A673 (cell line): ENCODE measurements at regions of chr10 and their contacts with region 1.

Region 1: DNA sequence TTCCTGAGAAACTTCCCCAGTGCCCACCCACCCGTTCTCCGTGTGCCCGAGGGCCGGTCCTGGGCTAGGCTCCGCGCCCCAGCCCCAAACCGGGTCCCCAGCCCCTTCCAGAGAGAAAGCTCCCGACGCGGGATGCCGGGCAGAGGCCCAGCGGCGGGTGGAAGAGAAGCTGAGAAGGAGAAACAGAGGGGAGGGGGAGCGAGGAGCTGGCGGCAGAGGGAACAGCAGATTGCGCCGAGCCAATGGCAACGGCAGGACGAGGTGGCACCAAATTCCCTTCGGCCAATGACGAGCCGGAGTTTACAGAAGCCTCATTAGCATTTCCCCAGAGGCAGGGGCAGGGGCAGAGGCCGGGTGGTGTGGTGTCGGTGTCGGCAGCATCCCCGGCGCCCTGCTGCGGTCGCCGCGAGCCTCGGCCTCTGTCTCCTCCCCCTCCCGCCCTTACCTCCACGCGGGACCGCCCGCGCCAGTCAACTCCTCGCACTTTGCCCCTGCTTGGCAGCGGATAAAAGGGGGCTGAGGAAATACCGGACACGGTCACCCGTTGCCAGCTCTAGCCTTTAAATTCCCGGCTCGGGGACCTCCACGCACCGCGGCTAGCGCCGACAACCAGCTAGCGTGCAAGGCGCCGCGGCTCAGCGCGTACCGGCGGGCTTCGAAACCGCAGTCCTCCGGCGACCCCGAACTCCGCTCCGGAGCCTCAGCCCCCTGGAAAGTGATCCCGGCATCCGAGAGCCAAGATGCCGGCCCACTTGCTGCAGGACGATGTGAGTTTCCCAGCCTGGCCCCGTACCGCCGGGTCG is at the start of gene SCD:
- DNase-seq: peak; percentile 98
- H3K4me3 ChIP-seq: peak within 1 kb of the TSS; percentile 93
- H3K27ac ChIP-seq: peak within 1 kb of the TSS; percentile 94
- H3K4me1 ChIP-seq: peaks cover 21% of the 10 kb centered on the region
- H3K27me3 ChIP-seq: no peaks in the 10 kb centered on the region
- CTCF ChIP-seq: no peak
- total RNA-seq, gene SCD: 519 and 559 TPM in 2 replicates

Region 2: DNA sequence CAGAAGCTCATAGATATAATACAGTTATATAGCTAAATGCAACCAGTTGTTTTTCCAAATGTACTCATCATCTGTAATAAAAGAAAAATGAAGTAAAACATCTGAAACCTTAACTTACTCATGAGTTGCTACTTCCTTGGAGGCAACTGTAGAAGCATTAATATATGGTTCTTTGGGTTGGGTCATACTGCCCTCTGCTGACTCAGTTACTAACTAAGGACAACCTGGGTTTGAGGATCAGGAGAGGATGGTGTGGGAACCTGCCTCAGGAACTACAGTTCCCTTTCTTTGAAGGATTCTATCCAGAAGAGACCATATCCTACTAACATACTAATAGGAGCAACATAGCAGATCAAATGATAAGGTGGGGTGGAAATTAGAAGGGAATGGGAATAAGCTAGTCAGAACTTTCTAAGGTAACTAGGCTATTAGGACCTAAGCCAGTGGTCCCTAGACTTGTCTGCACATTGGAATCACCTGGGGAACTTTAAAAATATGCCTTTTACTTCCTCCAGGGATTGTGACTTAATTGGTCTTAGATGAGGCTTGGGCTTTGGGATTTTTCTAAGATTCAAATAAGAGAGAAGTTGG is 635.7 kb before region 1 on chr10:
- CTCF ChIA-PET with region 1: no interaction called
- POLR2A ChIA-PET with region 1: no interaction called
- intact Hi-C with region 1: no loop called
- DNase-seq: peak; percentile 60
- H3K4me3 ChIP-seq: no peak overlapping the region
- H3K27ac ChIP-seq: no peak overlapping the region
- H3K4me1 ChIP-seq: no peaks in the 10 kb centered on the region
- H3K27me3 ChIP-seq: no peaks in the 10 kb centered on the region
- CTCF ChIP-seq: peak; percentile 66

Region 3: GRCh38 chr10:99730026-99730425 is 616.9 kb before region 1 on chr10:
- CTCF ChIA-PET with region 1: no interaction called
- POLR2A ChIA-PET with region 1: no interaction called
- intact Hi-C with region 1: no loop called
- DNase-seq: no peak
- H3K4me3 ChIP-seq: no peak overlapping the region
- H3K27ac ChIP-seq: no peak overlapping the region
- H3K4me1 ChIP-seq: no peaks in the 10 kb centered on the region
- H3K27me3 ChIP-seq: no peaks in the 10 kb centered on the region
- CTCF ChIP-seq: no peak

Region 4: GRCh38 chr10:99754670-99755069 is 592.3 kb before region 1 on chr10:
- CTCF ChIA-PET with region 1: no interaction called
- POLR2A ChIA-PET with region 1: no interaction called
- intact Hi-C with region 1: no loop called
- DNase-seq: no peak
- H3K4me3 ChIP-seq: no peak overlapping the region
- H3K27ac ChIP-seq: no peak overlapping the region
- H3K4me1 ChIP-seq: peaks cover 27% of the 10 kb centered on the region
- H3K27me3 ChIP-seq: no peaks in the 10 kb centered on the region
- CTCF ChIP-seq: no peak

Region 5: DNA sequence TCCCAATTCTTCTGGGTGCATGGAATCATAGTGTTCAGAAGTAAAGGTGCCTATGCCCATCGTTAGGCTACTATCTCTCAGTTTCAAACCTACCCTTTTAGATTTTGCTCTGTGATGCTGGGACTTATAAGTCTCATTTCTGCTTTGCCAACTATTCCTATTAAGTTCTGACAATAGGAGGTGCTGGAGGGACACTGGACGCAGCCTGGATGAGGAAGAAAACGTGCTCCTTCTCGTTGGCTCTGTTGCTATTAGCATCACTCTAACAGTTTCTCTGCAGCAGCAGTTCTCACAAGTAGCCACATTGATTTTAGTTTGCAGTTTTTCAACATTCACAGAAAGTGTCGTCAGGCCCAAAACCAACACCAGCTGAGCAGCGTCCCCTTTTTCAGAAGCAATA is 492.1 kb before region 1 on chr10:
- CTCF ChIA-PET with region 1: no interaction called
- POLR2A ChIA-PET with region 1: no interaction called
- intact Hi-C with region 1: loop called (anchors 10 kb)
- DNase-seq: peak; percentile 83
- H3K4me3 ChIP-seq: no peak overlapping the region
- H3K27ac ChIP-seq: no peak overlapping the region
- H3K4me1 ChIP-seq: peaks cover 13% of the 10 kb centered on the region
- H3K27me3 ChIP-seq: no peaks in the 10 kb centered on the region
- CTCF ChIP-seq: peak; percentile 71

Region 6: GRCh38 chr10:100174699-100175677 is 172.0 kb before region 1 on chr10:
- CTCF ChIA-PET with region 1: no interaction called
- POLR2A ChIA-PET with region 1: no interaction called
- intact Hi-C with region 1: no loop called
- DNase-seq: no peak
- H3K4me3 ChIP-seq: no peak overlapping the region
- H3K27ac ChIP-seq: no peak overlapping the region
- H3K4me1 ChIP-seq: no peaks in the 10 kb centered on the region
- H3K27me3 ChIP-seq: no peaks in the 10 kb centered on the region
- CTCF ChIP-seq: no peak

Region 7: DNA sequence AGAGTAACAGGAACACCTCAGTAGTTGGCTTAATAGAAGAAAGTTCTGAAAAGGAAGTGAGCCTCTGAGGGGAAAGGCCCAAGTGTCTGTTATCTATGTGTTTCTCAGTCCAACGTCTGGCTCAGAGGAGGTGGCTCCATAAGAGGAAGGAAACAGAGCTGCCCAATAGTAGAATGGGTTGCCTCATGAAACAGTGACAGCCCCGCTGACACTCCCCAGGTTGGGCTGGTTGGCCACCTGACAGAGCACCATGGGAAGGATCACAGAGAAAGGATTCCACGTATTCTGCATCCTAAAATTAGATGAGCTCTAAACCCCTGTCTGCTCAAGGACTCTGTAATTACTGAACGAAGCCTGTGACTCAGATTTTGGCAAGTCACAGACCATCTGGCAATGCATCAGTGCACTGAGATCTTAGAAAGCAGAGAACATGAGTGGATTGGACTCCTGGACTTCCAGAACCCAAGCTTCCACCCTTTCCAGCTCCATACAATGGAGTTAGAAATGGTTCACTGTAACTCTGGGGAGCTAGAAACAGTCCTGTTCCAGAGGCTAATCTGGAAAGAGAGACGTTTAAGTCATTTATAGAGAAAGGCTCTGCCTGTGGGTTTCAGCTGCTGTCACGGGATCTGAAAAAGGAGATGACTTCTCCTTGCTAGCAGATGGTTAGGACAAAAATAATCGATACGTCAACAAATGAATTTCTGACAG is 19.8 kb before region 1 on chr10:
- CTCF ChIA-PET with region 1: no interaction called
- POLR2A ChIA-PET with region 1: interaction called, 23 read pairs
- intact Hi-C with region 1: no loop called
- DNase-seq: peak; percentile 38
- H3K4me3 ChIP-seq: no peak overlapping the region
- H3K27ac ChIP-seq: no peak overlapping the region
- H3K4me1 ChIP-seq: peaks cover 18% of the 10 kb centered on the region
- H3K27me3 ChIP-seq: no peaks in the 10 kb centered on the region
- CTCF ChIP-seq: no peak

Region 8: GRCh38 chr10:100373298-100374136 is 26.6 kb after region 1 on chr10:
- CTCF ChIA-PET with region 1: interaction called, 4 read pairs
- POLR2A ChIA-PET with region 1: interaction called, 12 read pairs
- intact Hi-C with region 1: no loop called
- DNase-seq: peak; percentile 99
- H3K4me3 ChIP-seq: peak overlapping the region; percentile 75
- H3K27ac ChIP-seq: peak overlapping the region; percentile 100
- H3K4me1 ChIP-seq: peaks cover 30% of the 10 kb centered on the region
- H3K27me3 ChIP-seq: no peaks in the 10 kb centered on the region
- CTCF ChIP-seq: no peak

Region 9: GRCh38 chr10:100419911-100420449 is 73.0 kb after region 1 on chr10:
- CTCF ChIA-PET with region 1: no interaction called
- POLR2A ChIA-PET with region 1: interaction called, 14 read pairs
- intact Hi-C with region 1: no loop called
- DNase-seq: no peak
- H3K4me3 ChIP-seq: no peak overlapping the region
- H3K27ac ChIP-seq: no peak overlapping the region
- H3K4me1 ChIP-seq: no peaks in the 10 kb centered on the region
- H3K27me3 ChIP-seq: no peaks in the 10 kb centered on the region
- CTCF ChIP-seq: no peak

Region 10: DNA sequence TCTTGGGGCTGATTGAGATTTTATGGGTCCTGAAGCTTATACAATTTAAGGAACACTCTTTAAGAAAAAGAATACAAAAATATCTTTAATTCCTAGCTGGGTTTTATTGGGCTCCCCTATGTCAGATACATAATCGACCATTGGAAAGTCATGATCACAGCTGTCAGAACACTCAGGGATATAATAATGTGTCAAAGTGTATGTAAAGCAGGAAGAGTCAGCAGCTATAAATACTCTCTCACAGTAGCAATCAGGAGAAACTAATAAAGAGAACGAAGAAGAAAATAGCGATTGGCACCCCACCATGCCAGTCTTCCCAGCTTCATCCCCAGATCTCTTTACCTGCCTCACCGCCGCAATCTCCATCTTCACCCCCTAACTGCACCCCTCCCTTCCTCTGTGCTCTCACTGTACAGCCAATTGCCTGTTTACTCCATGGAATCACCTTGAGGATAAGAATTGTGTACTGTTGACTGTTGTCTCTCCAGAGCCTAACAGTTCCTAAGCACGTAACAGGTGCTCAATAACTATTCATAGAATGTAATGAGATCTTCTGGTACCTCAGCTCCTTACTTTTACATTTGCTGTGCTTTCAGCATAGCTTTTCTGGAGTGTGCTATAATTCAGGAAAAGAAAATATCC is 91.8 kb after region 1 on chr10:
- CTCF ChIA-PET with region 1: interaction called, 22 read pairs
- POLR2A ChIA-PET with region 1: interaction called, 7 read pairs
- intact Hi-C with region 1: loop called (anchors 1 kb)
- DNase-seq: no peak
- H3K4me3 ChIP-seq: no peak overlapping the region
- H3K27ac ChIP-seq: no peak overlapping the region
- H3K4me1 ChIP-seq: no peaks in the 10 kb centered on the region
- H3K27me3 ChIP-seq: no peaks in the 10 kb centered on the region
- CTCF ChIP-seq: no peak